Activated CD4-positive, alpha-beta T cell treated with anti-CD3 and anti-CD28 coated beads, Interleukin-2, amount 10 ng/mL, durations not matched to agents 24 days and 14 days (primary cell): ENCODE measurements at regions of chr16 and their contacts with region 1.

Region 1: GRCh38 chr16:2905431-2906387 is 6.0 kb upstream of the FLYWCH1 start:
- DNase-seq: peak; percentile 99
- H3K4me3 Mint-ChIP-seq: peak overlapping the region; percentile 98
- H3K27ac Mint-ChIP-seq: peak overlapping the region; percentile 92
- H3K4me1 Mint-ChIP-seq: peaks cover 17% of the 10 kb centered on the region
- H3K27me3 Mint-ChIP-seq: peaks cover 2% of the 10 kb centered on the region

Region 2: GRCh38 chr16:2919511-2920255 is 14.0 kb after region 1 on chr16:
- intact Hi-C with region 1: loop called (anchors 1 kb)
- DNase-seq: peak; percentile 91
- H3K4me3 Mint-ChIP-seq: no peak overlapping the region
- H3K27ac Mint-ChIP-seq: peak overlapping the region; percentile 38
- H3K4me1 Mint-ChIP-seq: peaks cover 8% of the 10 kb centered on the region
- H3K27me3 Mint-ChIP-seq: no peaks in the 10 kb centered on the region

Region 3: GRCh38 chr16:3282730-3283524 is 377.2 kb after region 1 on chr16 and contains the start of gene ZNF263:
- intact Hi-C with region 1: no loop called
- DNase-seq: peak; percentile 98
- H3K4me3 Mint-ChIP-seq: peak within 1 kb of the TSS; percentile 88
- H3K27ac Mint-ChIP-seq: peak within 1 kb of the TSS; percentile 98
- H3K4me1 Mint-ChIP-seq: peaks cover 18% of the 10 kb centered on the region
- H3K27me3 Mint-ChIP-seq: peaks cover 4% of the 10 kb centered on the region
- total RNA-seq, gene ZNF263: 27.0 and 31.3 TPM in 2 replicates